ENCODE measurements at regions of chr10 and their contacts with region 1.

Region 1: GRCh38 chr10:123402656-123403055 is 248.5 kb downstream of the BUB3 start:
- DNase-seq: no peak

Region 2: GRCh38 chr10:123442901-123443300 is 40.2 kb after region 1 on chr10:
- intact Hi-C with region 1: loop called in 1 of 2 experiments (anchors 1 kb)
- DNase-seq: no peak